ENCODE measurements at regions of chr10 and their contacts with region 1.

Region 1: GRCh38 chr10:17430647-17431355 is 23.6 kb downstream of the ST8SIA6 start:
- DNase-seq: peak; percentile 59
- H3K4me3 ChIP-seq: no peak overlapping the region
- H3K27ac ChIP-seq: peak overlapping the region; percentile 40
- H3K4me1 ChIP-seq: peaks cover 43% of the 10 kb centered on the region
- H3K27me3 ChIP-seq: peaks cover 53% of the 10 kb centered on the region
- CTCF ChIP-seq: peak; percentile 93

Region 2: GRCh38 chr10:16843252-16843870 is 587.4 kb before region 1 on chr10:
- intact Hi-C with region 1: loop called (anchors 10 kb)
- DNase-seq: no peak
- H3K4me3 ChIP-seq: no peak overlapping the region
- H3K27ac ChIP-seq: no peak overlapping the region
- H3K4me1 ChIP-seq: no peaks in the 10 kb centered on the region
- H3K27me3 ChIP-seq: no peaks in the 10 kb centered on the region
- CTCF ChIP-seq: peak; percentile 76

Measured in left ventricle myocardium inferior (tissue), 1 donor.